ENCODE measurements at regions of chr1 and their contacts with region 1.

Region 1: DNA sequence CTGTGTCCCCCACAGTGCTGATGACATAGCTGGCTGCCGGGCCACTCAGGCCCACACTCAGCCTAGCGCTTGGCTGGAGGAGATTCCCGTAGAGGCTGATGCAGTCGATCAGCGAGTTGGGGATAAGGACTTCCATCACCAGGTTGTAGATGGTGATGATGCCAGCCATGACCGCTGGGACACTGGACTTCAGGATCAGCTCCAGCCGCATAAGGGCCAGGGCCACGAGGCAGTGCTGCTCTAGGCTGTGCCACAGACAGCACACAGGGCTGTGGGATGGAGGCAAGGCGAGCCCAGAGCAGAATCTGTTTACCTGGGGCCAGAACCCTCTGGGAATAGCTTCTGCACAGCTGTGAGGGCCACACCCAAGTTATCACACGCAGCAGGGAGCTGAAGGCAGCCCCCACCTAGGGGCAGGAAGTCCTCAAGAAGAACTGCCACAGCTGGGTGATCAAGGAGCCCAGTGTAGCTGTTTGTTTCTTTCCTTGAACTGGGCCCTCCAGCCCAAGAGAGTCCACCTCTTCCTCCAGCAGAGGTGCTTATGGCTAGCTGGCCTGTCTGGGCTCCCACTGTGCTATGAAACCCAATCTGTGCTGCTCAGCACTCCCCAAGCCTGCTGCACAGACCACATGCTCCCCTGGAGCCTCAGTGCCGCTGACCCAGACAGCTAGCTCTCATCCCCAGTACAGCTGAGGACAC is 6.2 kb downstream of the SLC2A1 start:
- DNase-seq: no peak
- H3K4me3 ChIP-seq: no peak overlapping the region; a peak in 1 of 8 replicates
- H3K27ac ChIP-seq: peak overlapping the region; percentile 43
- H3K4me1 ChIP-seq: peaks cover 22 to 59% (median 45%) of the 10 kb centered on the region in 4 experiments
- H3K27me3 ChIP-seq: no peaks in the 10 kb centered on the region
- CTCF ChIP-seq: no peak
- EP300 ChIP-seq: no peak
- POLR2A ChIP-seq: peak in 1 of 2 experiments; percentile 37; a peak in 2 of 3 replicates
- RAD21 ChIP-seq: no peak

Region 2: DNA sequence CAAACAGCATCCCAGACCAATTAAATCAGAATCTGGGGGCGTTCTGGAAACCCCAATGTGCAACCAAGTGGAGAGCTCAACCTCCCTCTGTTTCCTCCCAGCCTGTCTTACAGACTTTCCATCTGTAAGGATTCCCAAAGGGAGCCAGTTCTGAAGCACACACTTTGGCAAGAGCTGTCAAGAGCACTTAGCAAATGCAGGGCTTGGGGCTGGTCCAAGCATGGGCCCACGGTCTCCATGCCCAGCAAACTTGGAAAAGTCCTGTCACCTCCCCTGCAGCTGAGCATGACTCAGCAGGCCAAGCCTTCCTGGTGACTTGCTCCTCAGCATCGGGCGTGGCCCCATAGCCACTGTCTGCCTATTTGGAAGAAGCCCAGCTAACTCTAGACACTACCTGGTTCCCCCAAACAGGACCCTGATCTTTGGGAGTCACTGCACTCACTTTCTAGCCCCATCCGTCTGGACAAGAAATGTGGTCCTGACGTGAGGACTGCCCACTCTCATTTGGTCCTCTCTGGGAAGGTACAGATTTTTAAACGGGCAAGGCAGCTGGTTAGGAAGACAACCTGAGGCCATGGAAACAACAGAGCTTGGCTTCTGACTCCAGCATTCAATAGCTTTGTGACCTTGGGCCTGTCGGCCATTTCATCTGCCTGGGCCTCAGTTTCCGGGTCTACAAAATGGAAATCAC is 10.7 kb before region 1 on chr1:
- CTCF ChIA-PET with region 1: interaction called, 10 read pairs
- POLR2A ChIA-PET with region 1: interaction called, 29 read pairs
- DNase-seq: no peak
- H3K4me3 ChIP-seq: no peak overlapping the region
- H3K27ac ChIP-seq: no peak overlapping the region
- H3K4me1 ChIP-seq: peaks cover 5 to 31% (median 15%) of the 10 kb centered on the region in 4 experiments
- H3K27me3 ChIP-seq: no peaks in the 10 kb centered on the region
- CTCF ChIP-seq: no peak
- EP300 ChIP-seq: no peak
- POLR2A ChIP-seq: no peak
- RAD21 ChIP-seq: no peak

Region 3: GRCh38 chr1:43101061-43101460 is 148.6 kb after region 1 on chr1:
- CTCF ChIA-PET with region 1: no interaction called
- POLR2A ChIA-PET with region 1: no interaction called
- DNase-seq: no peak
- H3K4me3 ChIP-seq: no peak overlapping the region
- H3K27ac ChIP-seq: no peak overlapping the region
- H3K4me1 ChIP-seq: no peaks in the 10 kb centered on the region
- H3K27me3 ChIP-seq: no peaks in the 10 kb centered on the region
- CTCF ChIP-seq: no peak
- EP300 ChIP-seq: no peak
- POLR2A ChIP-seq: no peak
- RAD21 ChIP-seq: no peak